CD4-positive, alpha-beta memory T cell (primary cell): ENCODE measurements at regions of chr7 and their contacts with region 1.

Region 1: DNA sequence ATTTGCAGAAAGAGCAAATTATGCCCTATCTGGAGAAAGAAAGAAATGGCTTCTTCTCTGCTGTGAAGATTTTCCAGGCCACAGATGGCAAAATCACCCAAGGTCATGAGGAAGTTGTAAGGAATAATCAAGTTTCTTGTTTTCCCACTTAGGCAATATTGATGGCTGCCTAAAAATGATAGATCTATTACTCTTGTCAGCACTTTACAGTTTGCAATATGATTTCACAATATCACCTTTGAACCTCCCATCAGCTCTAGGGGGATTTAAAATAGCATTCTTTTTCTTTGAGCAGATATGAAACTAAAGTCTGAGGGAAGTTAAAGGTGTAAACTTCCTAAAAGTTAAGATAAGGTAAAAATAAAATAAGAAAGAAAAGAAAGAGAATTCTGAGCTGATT is 6.7 kb downstream of the NPSR1 start:
- DNase-seq: no peak
- H3K4me3 ChIP-seq: no peak overlapping the region
- H3K4me3 Mint-ChIP-seq: no peak overlapping the region
- H3K27ac ChIP-seq: no peak overlapping the region
- H3K27ac Mint-ChIP-seq: no peak overlapping the region
- H3K4me1 ChIP-seq: no peaks in the 10 kb centered on the region
- H3K4me1 Mint-ChIP-seq: no peaks in the 10 kb centered on the region
- H3K27me3 ChIP-seq: no peaks in the 10 kb centered on the region
- H3K27me3 Mint-ChIP-seq: peaks cover 10 to 17% of the 10 kb centered on the region in 2 donors

Region 2: DNA sequence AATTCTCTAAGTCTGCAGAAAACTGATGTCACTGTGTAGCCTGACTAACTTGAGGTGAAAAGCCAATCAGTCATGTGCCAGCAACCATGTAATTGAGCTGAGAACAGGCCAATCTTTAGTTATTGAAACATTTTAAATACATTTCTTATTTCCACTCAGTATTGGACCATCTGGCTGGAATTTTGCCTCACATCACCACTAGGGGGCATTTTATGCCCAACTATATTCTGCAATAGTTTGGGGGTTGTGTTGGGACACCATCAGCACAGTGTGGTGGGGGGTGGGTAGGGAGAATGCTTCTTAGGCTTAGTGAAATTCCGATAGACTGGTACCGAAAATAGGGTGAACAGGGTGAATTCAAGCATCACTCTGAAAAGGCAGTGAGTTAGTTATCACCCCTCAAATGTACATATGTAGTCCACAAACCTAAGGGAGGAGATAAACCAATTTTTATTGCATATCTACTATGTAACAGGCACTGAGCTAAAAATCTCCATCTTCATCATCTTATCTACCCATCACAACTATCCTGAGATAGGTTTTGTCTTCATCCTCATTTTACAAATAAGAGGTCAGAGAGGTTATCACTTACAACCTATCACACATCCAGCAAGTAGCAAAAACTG is 11.1 kb after region 1 on chr7:
- CTCF ChIA-PET with region 1: interaction called, 12 read pairs
- POLR2A ChIA-PET with region 1: no interaction called
- intact Hi-C with region 1: no loop called
- DNase-seq: peak in 2 of 5 donors; percentile 6
- H3K4me3 ChIP-seq: no peak overlapping the region
- H3K4me3 Mint-ChIP-seq: no peak overlapping the region
- H3K27ac ChIP-seq: no peak overlapping the region
- H3K27ac Mint-ChIP-seq: no peak overlapping the region
- H3K4me1 ChIP-seq: no peaks in the 10 kb centered on the region
- H3K4me1 Mint-ChIP-seq: no peaks in the 10 kb centered on the region
- H3K27me3 ChIP-seq: no peaks in the 10 kb centered on the region
- H3K27me3 Mint-ChIP-seq: no peaks in the 10 kb centered on the region